ENCODE measurements at regions of chr1 and their contacts with region 1.

Region 1: DNA sequence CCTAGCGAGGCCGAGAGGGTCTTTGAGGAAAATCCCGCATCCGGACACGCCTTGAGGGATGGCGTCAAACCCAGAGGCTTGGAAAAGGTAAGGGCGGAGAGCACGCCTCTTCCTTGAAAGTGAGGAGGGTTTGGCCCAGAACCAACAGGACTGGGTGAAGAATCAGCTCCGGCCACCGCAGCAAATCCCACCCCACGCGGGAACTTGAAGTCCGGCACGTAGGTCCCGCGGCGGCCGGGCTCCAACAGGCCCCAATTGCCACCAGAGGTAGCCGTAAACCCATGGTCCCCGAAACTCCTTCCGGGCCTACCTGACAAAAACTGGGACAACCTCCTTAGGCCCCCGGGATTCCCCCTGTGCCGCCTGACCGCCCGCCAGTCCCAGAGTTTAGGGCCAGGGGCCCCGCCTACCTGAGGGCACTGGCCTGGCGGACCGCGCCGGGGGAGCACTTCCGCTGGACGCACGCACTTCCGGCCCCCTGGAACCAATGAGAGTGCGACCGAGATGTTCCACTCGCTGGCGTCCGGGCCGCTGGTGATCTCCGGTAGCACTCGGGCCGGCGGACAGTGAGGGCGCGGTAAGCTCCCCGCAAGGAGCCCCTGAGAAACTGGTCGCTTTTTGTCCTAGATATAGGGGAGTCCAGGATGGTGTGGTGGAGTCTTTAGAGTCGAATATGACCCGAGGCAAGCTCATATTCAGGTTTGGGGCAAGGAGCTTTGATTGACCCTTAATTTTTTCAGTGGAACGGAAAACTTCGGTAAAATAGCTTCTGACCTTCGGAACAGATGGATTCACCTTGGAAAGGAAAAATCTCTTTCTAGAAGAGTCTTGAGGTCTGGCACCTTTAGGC is at the starts of genes LZIC and NMNAT1:
- DNase-seq: peak; percentile 98
- H3K4me3 ChIP-seq: peak within 1 kb of the TSS; percentile 72 to 93 (median 78)
- H3K27ac ChIP-seq: peak within 1 kb of the TSS; percentile 85 to 93 (median 92)
- H3K4me1 ChIP-seq: peaks cover 15 to 41% (median 23%) of the 10 kb centered on the region in 4 donors
- H3K27me3 ChIP-seq: no peaks in the 10 kb centered on the region
- CTCF ChIP-seq: peak in 2 of 3 experiments; percentile 15 to 35
- EP300 ChIP-seq: no peak
- POLR2A ChIP-seq: peak; percentile 62
- total RNA-seq, gene LZIC: 25.4 to 30.6 (median 27.7) TPM
- total RNA-seq, gene NMNAT1: 5.0 to 9.8 (median 7.4) TPM

Region 2: GRCh38 chr1:9874959-9875635 is 68.1 kb before region 1 on chr1:
- intact Hi-C with region 1: loop called (anchors 2 kb)
- DNase-seq: no peak
- H3K4me3 ChIP-seq: peak overlapping the region; percentile 30 to 47 (median 39)
- H3K27ac ChIP-seq: peak overlapping the region; percentile 67 to 73 (median 72)
- H3K4me1 ChIP-seq: peaks cover 19 to 24% (median 21%) of the 10 kb centered on the region in 4 donors
- H3K27me3 ChIP-seq: no peaks in the 10 kb centered on the region
- CTCF ChIP-seq: peak; percentile 93 to 97 (median 94)
- EP300 ChIP-seq: no peak
- POLR2A ChIP-seq: no peak

Region 3: DNA sequence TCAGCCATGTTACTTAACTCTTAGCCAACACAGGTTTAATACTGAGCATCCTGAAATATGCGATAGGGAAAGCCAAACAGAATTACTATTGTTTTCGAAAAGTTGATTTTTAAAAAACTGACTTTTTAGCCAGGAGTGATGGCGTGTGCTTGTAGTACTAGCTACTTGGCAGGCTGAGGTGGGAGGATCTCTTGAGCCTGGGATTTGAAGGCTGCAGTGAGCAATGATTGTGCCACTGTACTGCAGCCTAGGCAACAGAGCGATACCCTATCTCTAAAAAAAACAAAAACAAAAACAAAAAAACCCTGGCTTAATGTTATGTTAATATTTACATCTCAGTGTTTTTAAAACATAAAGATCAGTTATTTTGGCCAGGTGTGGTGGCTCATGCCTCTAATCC is 16.8 kb after region 1 on chr1:
- intact Hi-C with region 1: no loop called
- DNase-seq: no peak
- H3K4me3 ChIP-seq: no peak overlapping the region
- H3K27ac ChIP-seq: no peak overlapping the region
- H3K4me1 ChIP-seq: no peaks in the 10 kb centered on the region
- H3K27me3 ChIP-seq: no peaks in the 10 kb centered on the region
- CTCF ChIP-seq: no peak
- EP300 ChIP-seq: no peak
- POLR2A ChIP-seq: no peak

Region 4: DNA sequence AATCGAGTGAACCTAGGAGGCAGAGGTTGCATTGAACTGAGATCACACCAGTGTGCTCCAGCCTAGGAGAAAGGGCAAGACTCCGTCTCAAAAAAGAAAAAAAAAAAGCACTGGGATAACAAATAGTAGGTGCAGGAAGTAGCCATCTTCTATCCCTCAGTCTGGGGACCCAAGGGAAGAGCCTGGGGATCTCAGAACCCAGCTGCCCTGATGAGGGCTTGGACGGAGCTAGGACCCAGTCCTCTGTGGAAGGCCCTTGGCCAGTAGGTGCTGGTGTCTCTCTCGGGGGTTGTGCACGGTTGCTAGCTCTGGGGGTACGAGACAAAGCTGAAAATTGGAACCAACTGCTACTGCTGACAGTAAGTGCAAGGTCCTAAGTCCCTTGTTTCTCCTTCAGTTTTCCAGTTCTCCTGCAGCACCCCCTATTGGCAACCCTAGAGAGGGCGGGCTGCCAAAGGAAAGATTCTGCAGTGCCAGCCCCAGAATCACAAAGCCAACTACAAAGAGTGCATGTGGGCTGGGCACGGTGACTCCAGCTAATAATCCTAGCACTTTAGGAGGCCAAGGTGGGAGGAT is 209.6 kb after region 1 on chr1:
- intact Hi-C with region 1: loop called (anchors 5 kb)
- DNase-seq: no peak
- H3K4me3 ChIP-seq: no peak overlapping the region
- H3K27ac ChIP-seq: peak overlapping the region in 1 of 4 donors; percentile 8
- H3K4me1 ChIP-seq: peaks cover 9 to 38% (median 34%) of the 10 kb centered on the region in 4 donors
- H3K27me3 ChIP-seq: no peaks in the 10 kb centered on the region
- CTCF ChIP-seq: peak; percentile 44 to 72 (median 61)
- EP300 ChIP-seq: no peak
- POLR2A ChIP-seq: no peak